ENCODE measurements at regions of chr19 and their contacts with region 1.

Region 1: GRCh38 chr19:44689056-44689895 is 9.7 kb upstream of the CEACAM16 start:
- DNase-seq: peak; percentile 86
- H3K4me3 Mint-ChIP-seq: no peak overlapping the region
- H3K27ac Mint-ChIP-seq: no peak overlapping the region
- H3K4me1 Mint-ChIP-seq: peaks cover 42% of the 10 kb centered on the region
- H3K27me3 Mint-ChIP-seq: peaks cover 6% of the 10 kb centered on the region

Region 2: DNA sequence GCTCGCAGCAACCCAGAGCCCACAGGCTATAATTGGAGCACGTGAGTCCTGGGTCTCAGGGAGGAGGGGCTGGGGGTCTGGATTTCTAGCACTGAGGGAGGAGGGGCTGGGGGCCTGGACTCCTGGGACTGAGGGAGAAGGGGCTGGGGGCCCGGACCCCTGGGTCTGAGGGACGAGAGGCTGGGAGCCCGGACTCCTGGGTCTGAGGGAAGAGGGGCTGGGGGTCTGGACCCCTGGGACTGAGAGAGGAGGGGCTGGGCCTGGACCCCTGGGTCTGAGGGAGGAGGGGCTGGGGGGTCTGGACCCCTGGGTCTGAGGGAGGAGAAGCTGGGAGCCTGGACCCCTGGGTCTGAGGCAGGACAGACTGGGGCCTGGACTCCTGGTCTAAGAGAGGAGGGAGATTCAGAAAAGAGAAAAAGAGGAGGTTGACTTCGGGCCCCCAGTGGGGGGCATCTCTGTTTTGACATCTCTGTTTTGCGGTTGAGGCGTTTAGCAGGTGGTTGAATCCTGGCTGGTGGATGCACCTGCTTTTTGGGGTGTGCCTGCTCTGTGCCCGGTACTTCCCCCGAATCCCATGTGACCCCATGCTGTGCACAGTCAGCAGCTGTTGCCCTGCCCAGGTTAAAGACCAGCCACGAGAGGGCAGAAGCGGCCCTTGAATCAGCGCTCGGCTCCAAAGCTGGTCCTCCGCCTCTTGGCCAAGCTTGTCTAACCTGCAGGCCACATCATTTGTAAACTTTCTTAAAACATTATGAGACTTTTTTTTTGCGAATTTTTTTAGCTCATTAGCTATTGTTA is 35.1 kb before region 1 on chr19:
- CTCF ChIA-PET with region 1: interaction called, 9 read pairs
- intact Hi-C with region 1: loop called (anchors 1 kb)
- DNase-seq: peak; percentile 91
- H3K4me3 Mint-ChIP-seq: no peak overlapping the region
- H3K27ac Mint-ChIP-seq: no peak overlapping the region
- H3K4me1 Mint-ChIP-seq: peaks cover 7% of the 10 kb centered on the region
- H3K27me3 Mint-ChIP-seq: peaks cover 2% of the 10 kb centered on the region

Region 3: GRCh38 chr19:44712864-44713515 is 23.7 kb after region 1 on chr19:
- CTCF ChIA-PET with region 1: interaction called, 19 read pairs
- intact Hi-C with region 1: no loop called
- DNase-seq: no peak
- H3K4me3 Mint-ChIP-seq: no peak overlapping the region
- H3K27ac Mint-ChIP-seq: no peak overlapping the region
- H3K4me1 Mint-ChIP-seq: peaks cover 4% of the 10 kb centered on the region
- H3K27me3 Mint-ChIP-seq: no peaks in the 10 kb centered on the region

Region 4: GRCh38 chr19:44752816-44753618 is 63.7 kb after region 1 on chr19:
- CTCF ChIA-PET with region 1: interaction called, 7 read pairs
- intact Hi-C with region 1: loop called (anchors 1 kb)
- DNase-seq: peak; percentile 98
- H3K4me3 Mint-ChIP-seq: peak overlapping the region; percentile 93
- H3K27ac Mint-ChIP-seq: peak overlapping the region; percentile 97
- H3K4me1 Mint-ChIP-seq: peaks cover 59% of the 10 kb centered on the region
- H3K27me3 Mint-ChIP-seq: no peaks in the 10 kb centered on the region

Region 5: GRCh38 chr19:44782729-44783128 is 93.5 kb after region 1 on chr19:
- CTCF ChIA-PET with region 1: interaction called, 17 read pairs
- intact Hi-C with region 1: no loop called
- DNase-seq: no peak
- H3K4me3 Mint-ChIP-seq: no peak overlapping the region
- H3K27ac Mint-ChIP-seq: no peak overlapping the region
- H3K4me1 Mint-ChIP-seq: peaks cover 4% of the 10 kb centered on the region
- H3K27me3 Mint-ChIP-seq: peaks cover 10% of the 10 kb centered on the region